PC-9 (cell line): ENCODE measurements at regions of chr9 and their contacts with region 1.

Region 1: DNA sequence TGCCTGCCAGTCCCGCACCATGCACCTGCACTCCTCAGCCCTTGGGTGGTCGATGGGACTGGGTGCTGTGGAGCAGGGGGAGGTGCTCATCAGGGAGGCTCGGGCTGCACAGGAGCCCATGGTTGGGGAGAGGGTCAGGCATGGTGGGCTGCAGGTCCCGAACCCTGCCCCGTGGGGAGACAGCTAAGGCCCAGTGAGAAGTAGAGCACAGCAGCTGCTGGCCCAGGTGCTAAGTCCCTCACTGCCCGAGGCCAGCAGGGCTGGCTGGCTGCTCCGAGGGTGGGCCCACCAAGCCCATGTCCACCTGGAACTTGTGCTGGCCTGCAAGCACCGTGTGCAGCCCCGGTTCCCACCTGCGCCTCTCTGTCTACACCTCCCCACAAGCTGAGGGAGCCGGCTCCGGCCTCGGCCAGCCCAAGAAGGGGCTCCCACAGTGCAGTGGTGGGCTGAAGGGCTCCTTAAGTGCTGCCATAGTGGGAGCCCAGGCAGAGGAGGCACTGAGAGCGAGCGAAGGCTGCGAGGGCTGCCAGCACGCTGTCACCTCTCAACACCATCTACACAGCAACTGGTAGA is 88.5 kb upstream of the ELAVL2 start:
- DNase-seq: no peak
- H3K4me3 ChIP-seq: no peak overlapping the region
- H3K27ac ChIP-seq: no peak overlapping the region
- H3K4me1 ChIP-seq: no peaks in the 10 kb centered on the region
- H3K27me3 ChIP-seq: no peaks in the 10 kb centered on the region
- CTCF ChIP-seq: no peak

Region 2: GRCh38 chr9:23934291-23934906 is 19.9 kb after region 1 on chr9:
- CTCF ChIA-PET with region 1: no interaction called
- POLR2A ChIA-PET with region 1: interaction called, 16 read pairs
- intact Hi-C with region 1: no loop called
- DNase-seq: no peak
- H3K4me3 ChIP-seq: no peak overlapping the region
- H3K27ac ChIP-seq: no peak overlapping the region
- H3K4me1 ChIP-seq: no peaks in the 10 kb centered on the region
- H3K27me3 ChIP-seq: no peaks in the 10 kb centered on the region
- CTCF ChIP-seq: no peak

Region 3: DNA sequence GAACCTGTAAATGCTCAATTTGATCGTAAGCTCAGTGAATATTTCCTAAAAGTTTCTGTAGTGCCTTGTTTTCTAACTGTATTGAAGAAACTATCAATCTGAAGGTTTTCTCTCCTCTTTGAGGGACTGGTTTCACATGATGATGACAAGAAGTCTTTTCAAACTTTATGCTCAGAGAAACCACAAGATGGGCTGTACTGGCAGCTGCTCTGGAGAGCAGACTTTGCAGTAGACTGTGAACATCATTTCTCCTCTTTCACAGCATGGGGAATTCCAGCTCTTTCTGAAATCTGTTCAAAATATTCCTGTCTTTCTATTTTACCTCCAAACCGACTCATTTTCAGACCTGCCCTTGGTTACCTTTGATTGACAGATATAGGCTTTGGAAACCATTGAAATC is 436.7 kb after region 1 on chr9:
- CTCF ChIA-PET with region 1: no interaction called
- POLR2A ChIA-PET with region 1: no interaction called
- intact Hi-C with region 1: no loop called
- DNase-seq: no peak
- H3K4me3 ChIP-seq: no peak overlapping the region
- H3K27ac ChIP-seq: no peak overlapping the region
- H3K4me1 ChIP-seq: no peaks in the 10 kb centered on the region
- H3K27me3 ChIP-seq: no peaks in the 10 kb centered on the region
- CTCF ChIP-seq: no peak